ENCODE measurements at regions of chr22 and their contacts with region 1.

Region 1: GRCh38 chr22:22884010-22884887 is 3.4 kb upstream of the IGLL5 start:
- DNase-seq: peak; percentile 73
- H3K4me3 Mint-ChIP-seq: no peak overlapping the region
- H3K27ac Mint-ChIP-seq: no peak overlapping the region
- H3K4me1 Mint-ChIP-seq: peaks cover 2% of the 10 kb centered on the region
- H3K27me3 Mint-ChIP-seq: peaks cover 14% of the 10 kb centered on the region

Region 2: DNA sequence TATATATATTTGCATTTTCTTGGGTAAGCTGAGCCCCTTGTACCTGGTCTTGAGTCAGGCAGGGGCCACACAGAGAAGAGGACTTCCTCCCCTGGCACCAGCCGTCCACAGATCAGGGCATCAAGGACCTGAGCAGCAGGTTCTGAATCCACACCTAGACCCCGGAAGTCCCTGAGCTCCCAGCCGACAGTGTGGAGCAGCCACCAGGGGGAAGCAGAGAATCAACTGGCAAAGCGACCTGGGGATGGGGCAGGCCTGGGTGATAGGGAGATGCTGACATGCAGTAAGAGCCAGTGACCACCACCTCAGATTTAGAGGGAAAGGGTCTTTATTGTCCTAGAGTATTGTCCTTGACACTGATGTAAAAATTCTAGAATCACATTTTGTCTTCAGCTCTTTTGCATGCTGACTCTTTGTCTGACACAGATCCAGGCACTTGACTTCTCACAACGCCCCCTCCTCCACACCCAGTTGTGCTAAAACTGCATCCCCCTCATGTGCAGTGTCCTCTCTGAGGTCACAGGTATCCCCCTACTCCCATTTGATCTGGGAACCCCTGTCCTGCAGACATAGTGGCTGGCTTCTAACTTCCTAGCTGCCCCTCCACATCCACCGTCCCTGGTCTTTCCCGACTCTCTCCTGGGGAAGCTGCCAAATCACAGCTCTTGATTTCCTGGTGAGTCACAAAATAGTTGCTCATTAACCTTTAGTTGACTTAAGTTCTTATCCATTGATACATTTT is 130.6 kb before region 1 on chr22:
- CTCF ChIA-PET with region 1: interaction called, 60 read pairs
- POLR2A ChIA-PET with region 1: no interaction called
- intact Hi-C with region 1: no loop called
- DNase-seq: peak; percentile 88
- H3K4me3 Mint-ChIP-seq: no peak overlapping the region
- H3K27ac Mint-ChIP-seq: peak overlapping the region; percentile 40
- H3K4me1 Mint-ChIP-seq: peaks cover 42% of the 10 kb centered on the region
- H3K27me3 Mint-ChIP-seq: no peaks in the 10 kb centered on the region

Region 3: DNA sequence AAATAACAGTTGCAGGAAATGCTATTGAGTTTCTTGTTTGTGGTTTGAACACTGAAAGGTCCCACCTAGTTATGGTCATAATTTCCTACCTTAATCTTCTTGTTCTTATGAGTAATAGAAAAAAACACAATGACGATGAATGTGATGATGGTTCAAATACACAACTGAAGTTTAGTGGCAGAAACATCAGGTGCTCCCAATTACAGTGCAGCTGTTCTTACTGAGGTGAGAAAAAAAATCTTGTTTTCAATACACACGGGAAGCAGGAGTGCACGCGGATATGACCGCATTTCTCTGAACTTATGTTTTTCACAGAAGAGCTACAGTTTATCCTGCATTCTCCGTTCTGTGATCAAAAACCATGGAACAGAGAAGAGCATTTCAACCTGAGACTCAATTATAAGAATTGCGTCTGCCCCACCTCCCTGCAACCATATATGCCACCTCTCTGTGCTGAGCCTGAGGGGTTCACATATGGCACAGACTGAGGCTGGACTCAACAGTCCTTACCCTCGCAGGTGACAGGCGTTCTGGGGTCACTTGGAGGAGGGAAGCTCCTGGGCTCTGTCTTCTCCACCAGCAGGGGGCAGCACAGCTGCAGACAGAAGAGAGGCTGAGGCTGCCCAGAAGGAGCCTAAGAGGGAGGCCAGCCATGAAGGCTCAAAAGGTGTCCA is 96.3 kb before region 1 on chr22:
- CTCF ChIA-PET with region 1: interaction called, 59 read pairs
- POLR2A ChIA-PET with region 1: no interaction called
- intact Hi-C with region 1: no loop called
- DNase-seq: peak; percentile 77
- H3K4me3 Mint-ChIP-seq: no peak overlapping the region
- H3K27ac Mint-ChIP-seq: no peak overlapping the region
- H3K4me1 Mint-ChIP-seq: peaks cover 44% of the 10 kb centered on the region
- H3K27me3 Mint-ChIP-seq: no peaks in the 10 kb centered on the region

Region 4: GRCh38 chr22:22810018-22810427 is 74.2 kb before region 1 on chr22:
- CTCF ChIA-PET with region 1: interaction called, 264 read pairs
- POLR2A ChIA-PET with region 1: no interaction called
- intact Hi-C with region 1: no loop called
- DNase-seq: peak; percentile 80
- H3K4me3 Mint-ChIP-seq: no peak overlapping the region
- H3K27ac Mint-ChIP-seq: no peak overlapping the region
- H3K4me1 Mint-ChIP-seq: peaks cover 24% of the 10 kb centered on the region
- H3K27me3 Mint-ChIP-seq: no peaks in the 10 kb centered on the region

Region 5: GRCh38 chr22:22848364-22848866 is 35.8 kb before region 1 on chr22:
- CTCF ChIA-PET with region 1: interaction called, 286 read pairs
- POLR2A ChIA-PET with region 1: no interaction called
- intact Hi-C with region 1: no loop called
- DNase-seq: peak; percentile 78
- H3K4me3 Mint-ChIP-seq: no peak overlapping the region
- H3K27ac Mint-ChIP-seq: no peak overlapping the region
- H3K4me1 Mint-ChIP-seq: peaks cover 28% of the 10 kb centered on the region
- H3K27me3 Mint-ChIP-seq: no peaks in the 10 kb centered on the region